H1 (cell line): ENCODE measurements at regions of chr7 and their contacts with region 1.

Region 1: GRCh38 chr7:102456327-102456726 is 8.3 kb downstream of the ALKBH4 start:
- DNase-seq: no peak
- H3K4me3 ChIP-seq: no peak overlapping the region
- H3K27ac ChIP-seq: no peak overlapping the region
- H3K4me1 ChIP-seq: peaks cover 0 to 3% (median 0%) of the 10 kb centered on the region in 4 experiments; a peak in 2 of 7 replicates
- H3K27me3 ChIP-seq: no peaks in the 10 kb centered on the region; a peak in 1 of 7 replicates
- CTCF ChIP-seq: no peak
- EP300 ChIP-seq: no peak
- POLR2A ChIP-seq: no peak
- RAD21 ChIP-seq: no peak

Region 2: DNA sequence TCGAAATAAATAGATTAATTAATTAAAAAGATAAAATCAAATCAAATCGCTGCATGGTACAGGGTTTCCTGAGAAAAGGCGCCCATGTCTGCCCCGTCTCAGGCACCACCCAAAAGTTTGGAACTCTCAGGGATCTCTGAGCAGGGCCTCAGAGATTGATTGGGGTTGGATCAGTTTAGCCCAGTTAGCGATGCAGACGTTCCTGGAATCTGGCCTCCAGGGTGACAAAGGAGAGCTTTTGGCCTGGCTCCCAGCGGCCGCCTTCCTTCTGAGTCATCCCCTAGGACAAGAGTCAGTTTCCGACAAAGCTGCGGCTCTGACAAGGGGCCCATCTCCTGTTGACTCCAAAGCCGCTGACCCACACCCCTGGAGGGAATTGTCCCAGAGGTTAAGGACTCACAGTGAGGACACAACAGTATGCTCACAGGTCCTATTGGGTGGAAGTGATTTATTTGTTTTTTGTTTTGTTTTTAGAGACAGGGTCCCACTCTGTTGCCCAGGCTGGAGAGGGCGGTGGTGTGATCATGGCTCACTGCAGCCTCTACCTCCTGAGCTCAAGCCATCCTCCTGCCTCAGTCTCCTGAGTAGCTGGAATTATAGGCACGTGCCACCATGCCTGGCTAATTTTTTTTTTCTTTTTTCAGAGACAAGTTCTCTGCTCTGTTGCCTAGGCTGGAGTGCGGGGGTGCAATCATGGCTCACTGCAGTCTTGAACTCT is 16.1 kb before region 1 on chr7:
- CTCF ChIA-PET with region 1: interaction called, 5 read pairs
- POLR2A ChIA-PET with region 1: interaction called, 27 read pairs
- DNase-seq: peak in 1 of 2 experiments; percentile 53
- H3K4me3 ChIP-seq: no peak overlapping the region
- H3K27ac ChIP-seq: no peak overlapping the region
- H3K4me1 ChIP-seq: peaks cover 0 to 9% (median 0%) of the 10 kb centered on the region in 4 experiments; a peak in 2 of 7 replicates
- H3K27me3 ChIP-seq: no peaks in the 10 kb centered on the region
- CTCF ChIP-seq: no peak
- EP300 ChIP-seq: no peak
- POLR2A ChIP-seq: no peak
- RAD21 ChIP-seq: no peak